ENCODE measurements at regions of chr19 and their contacts with region 1.

Region 1: DNA sequence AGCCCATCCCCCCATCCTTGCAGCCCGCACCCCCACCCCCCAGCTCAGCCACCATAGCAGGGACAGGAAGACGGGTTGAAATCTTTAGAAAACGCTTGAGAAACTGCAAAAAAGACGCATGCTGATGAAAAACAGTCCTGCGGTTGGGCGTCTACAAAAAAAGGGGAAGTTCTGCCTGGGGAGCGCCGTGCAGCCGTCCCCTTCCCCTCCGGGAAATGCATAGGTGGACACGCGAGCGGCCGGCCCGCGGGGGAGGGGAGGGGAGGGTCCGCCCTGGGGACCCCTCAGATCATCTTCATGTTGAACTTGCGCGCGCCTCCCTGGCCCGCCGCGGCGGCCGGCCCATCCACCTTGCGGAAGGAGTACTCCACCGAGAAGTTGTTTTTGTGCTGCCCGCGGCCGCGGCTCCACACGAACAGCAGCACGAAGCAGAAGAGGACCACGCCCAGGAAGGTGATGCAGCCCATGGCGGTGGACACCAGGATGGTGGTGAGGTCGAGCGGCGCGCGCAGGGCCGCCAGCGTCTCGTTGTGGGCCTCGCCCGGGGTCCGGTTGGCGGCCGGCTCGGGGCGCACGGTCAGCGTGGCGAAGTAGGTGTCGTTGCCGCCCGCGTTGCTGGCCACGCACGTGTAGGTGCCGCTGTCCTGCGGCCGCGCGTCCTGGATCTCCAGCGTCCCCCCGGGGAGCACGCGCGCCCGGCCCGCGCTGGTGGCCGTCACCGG is 7.9 kb upstream of the PEAK3 start:
- DNase-seq: no peak
- H3K4me3 ChIP-seq: peak overlapping the region; percentile 17 to 56 (median 20); a peak in 6 of 8 replicates
- H3K27ac ChIP-seq: no peak overlapping the region
- H3K4me1 ChIP-seq: peaks cover 0 to 22% (median 9%) of the 10 kb centered on the region in 4 experiments; a peak in 5 of 7 replicates
- H3K27me3 ChIP-seq: peaks cover 40 to 67% (median 59%) of the 10 kb centered on the region in 4 experiments
- CTCF ChIP-seq: no peak
- EP300 ChIP-seq: no peak
- POLR2A ChIP-seq: no peak
- RAD21 ChIP-seq: no peak

Region 2: DNA sequence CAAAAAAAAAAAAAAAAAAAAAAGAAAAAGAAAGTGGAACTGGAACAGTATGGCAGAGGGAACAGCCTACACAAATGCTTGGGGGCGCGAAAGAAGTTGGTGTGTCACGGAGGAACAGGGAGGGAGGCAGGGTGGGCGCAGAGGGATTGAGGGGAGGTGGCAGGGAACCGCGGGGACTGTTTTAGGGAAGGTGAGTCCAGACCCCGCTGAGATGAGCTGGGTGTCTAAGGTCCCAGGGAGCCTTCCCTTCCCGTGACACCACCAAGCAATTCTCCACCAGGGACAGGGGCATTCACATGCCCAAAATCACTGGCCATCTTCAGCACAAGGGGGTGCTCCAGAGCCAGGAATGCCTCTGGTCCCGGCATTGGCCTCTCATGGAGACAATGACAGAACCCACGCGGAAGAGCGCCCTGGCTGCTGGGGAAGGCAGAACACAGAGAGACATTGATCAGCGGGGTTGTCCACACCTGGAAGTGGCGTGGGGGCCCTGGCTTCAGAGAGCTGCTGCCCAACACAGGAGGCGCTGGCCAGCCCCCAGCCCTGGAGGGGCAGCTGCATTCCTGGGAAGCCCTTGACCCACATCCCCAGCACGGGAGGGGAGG is 14.8 kb before region 1 on chr19:
- CTCF ChIA-PET with region 1: interaction called, 46 read pairs
- POLR2A ChIA-PET with region 1: interaction called, 25 read pairs
- DNase-seq: peak in 1 of 2 experiments; percentile 84
- H3K4me3 ChIP-seq: no peak overlapping the region; a peak in 1 of 8 replicates
- H3K27ac ChIP-seq: peak overlapping the region; percentile 24; the same call in 1 of the 2 replicates
- H3K4me1 ChIP-seq: peaks cover 0 to 17% (median 7%) of the 10 kb centered on the region in 4 experiments; a peak in 5 of 7 replicates
- H3K27me3 ChIP-seq: no peaks in the 10 kb centered on the region
- CTCF ChIP-seq: peak; percentile 86 to 91 (median 89)
- EP300 ChIP-seq: no peak
- POLR2A ChIP-seq: peak in 1 of 2 experiments; percentile 34; a peak in 1 of 3 replicates
- RAD21 ChIP-seq: peak; percentile 82 to 84

Region 3: GRCh38 chr19:2309734-2310362 is 20.0 kb after region 1 on chr19:
- CTCF ChIA-PET with region 1: interaction called, 31 read pairs
- POLR2A ChIA-PET with region 1: interaction called, 16 read pairs
- DNase-seq: peak in 1 of 2 experiments; percentile 46
- H3K4me3 ChIP-seq: no peak overlapping the region
- H3K27ac ChIP-seq: no peak overlapping the region
- H3K4me1 ChIP-seq: peaks cover 0 to 13% (median 1%) of the 10 kb centered on the region in 4 experiments; a peak in 4 of 7 replicates
- H3K27me3 ChIP-seq: peaks cover 7 to 30% (median 23%) of the 10 kb centered on the region in 4 experiments
- CTCF ChIP-seq: no peak
- EP300 ChIP-seq: no peak
- POLR2A ChIP-seq: no peak
- RAD21 ChIP-seq: no peak

Region 4: GRCh38 chr19:2529473-2529918 is 239.6 kb after region 1 on chr19:
- CTCF ChIA-PET with region 1: no interaction called
- POLR2A ChIA-PET with region 1: no interaction called
- DNase-seq: no peak
- H3K4me3 ChIP-seq: no peak overlapping the region
- H3K27ac ChIP-seq: no peak overlapping the region
- H3K4me1 ChIP-seq: peaks cover 0 to 9% (median 4%) of the 10 kb centered on the region in 4 experiments; a peak in 4 of 7 replicates
- H3K27me3 ChIP-seq: no peaks in the 10 kb centered on the region
- CTCF ChIP-seq: no peak
- EP300 ChIP-seq: no peak
- POLR2A ChIP-seq: no peak
- RAD21 ChIP-seq: no peak